ENCODE measurements at regions of chr12 and their contacts with region 1.

Region 1: GRCh38 chr12:71392521-71393145 is 47.0 kb upstream of the LGR5 start:
- DNase-seq: peak; percentile 72
- ATAC-seq: peak; percentile 98
- H3K4me3 ChIP-seq: no peak overlapping the region
- H3K27ac ChIP-seq: no peak overlapping the region
- H3K4me1 ChIP-seq: peaks cover 0 to 9% of the 10 kb centered on the region in 2 experiments; a peak in 2 of 4 replicates
- H3K27me3 ChIP-seq: no peaks in the 10 kb centered on the region
- CTCF ChIP-seq: peak; percentile 56 to 80 (median 77); a peak in 5 of 6 replicates
- POLR2A ChIP-seq: no peak
- RAD21 ChIP-seq: peak; percentile 70

Region 2: DNA sequence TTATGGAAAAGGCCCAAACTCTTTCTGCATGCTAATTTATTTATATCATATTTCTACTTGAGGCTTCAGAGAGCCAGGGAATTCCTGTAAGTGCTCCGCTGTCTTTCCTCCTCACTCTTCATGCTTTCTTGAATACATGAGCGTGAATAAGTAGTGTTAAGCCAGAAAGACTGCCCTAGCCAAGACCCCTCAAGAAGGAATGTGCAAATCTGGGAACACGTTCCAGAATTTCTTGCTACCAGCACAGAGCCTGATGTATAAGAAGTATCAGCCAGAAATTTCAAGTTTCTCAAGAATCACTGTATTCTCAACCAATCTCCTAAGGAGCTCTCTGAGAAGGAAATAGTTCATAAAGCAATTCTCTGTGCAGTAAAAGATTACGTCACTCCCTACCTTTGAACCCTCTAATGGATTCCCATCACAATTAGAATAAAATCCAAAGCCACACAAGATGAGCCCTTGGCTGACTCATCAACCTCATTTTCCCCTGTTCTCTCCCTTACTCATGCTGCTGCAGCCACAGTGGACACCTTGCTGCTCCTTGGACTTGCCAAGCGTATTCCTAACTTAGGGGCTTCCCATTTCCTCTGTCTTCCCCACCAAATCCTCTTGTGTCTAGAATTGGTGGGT is 227.9 kb before region 1 on chr12:
- CTCF ChIA-PET with region 1: no interaction called
- POLR2A ChIA-PET with region 1: no interaction called
- RAD21 ChIA-PET with region 1: no interaction called
- intact Hi-C with region 1: no loop called
- DNase-seq: no peak
- ATAC-seq: no peak
- H3K4me3 ChIP-seq: no peak overlapping the region
- H3K27ac ChIP-seq: no peak overlapping the region
- H3K4me1 ChIP-seq: no peaks in the 10 kb centered on the region
- H3K27me3 ChIP-seq: no peaks in the 10 kb centered on the region
- CTCF ChIP-seq: no peak
- POLR2A ChIP-seq: no peak
- RAD21 ChIP-seq: no peak

Region 3: GRCh38 chr12:71216725-71217579 is 175.7 kb before region 1 on chr12:
- CTCF ChIA-PET with region 1: interaction called, 8 read pairs
- POLR2A ChIA-PET with region 1: no interaction called
- RAD21 ChIA-PET with region 1: no interaction called
- intact Hi-C with region 1: loop called (anchors 1 kb)
- DNase-seq: peak; percentile 55
- ATAC-seq: peak; percentile 84
- H3K4me3 ChIP-seq: no peak overlapping the region
- H3K27ac ChIP-seq: no peak overlapping the region
- H3K4me1 ChIP-seq: no peaks in the 10 kb centered on the region
- H3K27me3 ChIP-seq: no peaks in the 10 kb centered on the region
- CTCF ChIP-seq: peak; percentile 59 to 70 (median 70); a peak in 5 of 6 replicates
- POLR2A ChIP-seq: no peak
- RAD21 ChIP-seq: peak; percentile 81